ENCODE measurements at regions of chr4 and their contacts with region 1.

Region 1: DNA sequence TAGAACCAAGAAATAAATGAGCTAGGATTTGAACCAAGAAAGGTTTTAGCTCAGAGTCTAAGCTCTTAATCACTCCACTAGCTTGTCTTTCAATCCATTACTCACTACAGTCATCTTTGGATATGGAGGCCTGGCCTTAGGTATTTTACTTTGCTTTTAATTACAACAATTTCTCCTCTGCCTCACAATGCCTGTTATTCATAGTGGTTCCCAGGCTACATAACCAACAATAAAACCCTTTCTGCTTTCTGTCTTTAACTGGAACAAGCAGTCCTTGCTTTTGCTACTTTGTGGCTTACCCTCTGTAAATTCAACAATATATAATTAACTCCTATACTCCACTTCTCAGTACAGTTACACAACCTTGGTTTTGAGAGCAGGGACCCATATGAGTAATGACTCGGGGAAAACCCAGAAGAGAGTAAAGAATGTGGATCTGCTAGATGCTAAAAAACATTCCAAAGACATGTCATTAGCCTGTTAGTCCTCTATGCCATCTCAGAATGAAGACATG is 94.7 kb upstream of the NAP1L5 start:
- DNase-seq: no peak
- H3K4me3 Mint-ChIP-seq: no peak overlapping the region
- H3K27ac Mint-ChIP-seq: peak overlapping the region; percentile 74
- H3K4me1 Mint-ChIP-seq: peaks cover 15% of the 10 kb centered on the region
- H3K27me3 Mint-ChIP-seq: peaks cover 16% of the 10 kb centered on the region

Region 2: DNA sequence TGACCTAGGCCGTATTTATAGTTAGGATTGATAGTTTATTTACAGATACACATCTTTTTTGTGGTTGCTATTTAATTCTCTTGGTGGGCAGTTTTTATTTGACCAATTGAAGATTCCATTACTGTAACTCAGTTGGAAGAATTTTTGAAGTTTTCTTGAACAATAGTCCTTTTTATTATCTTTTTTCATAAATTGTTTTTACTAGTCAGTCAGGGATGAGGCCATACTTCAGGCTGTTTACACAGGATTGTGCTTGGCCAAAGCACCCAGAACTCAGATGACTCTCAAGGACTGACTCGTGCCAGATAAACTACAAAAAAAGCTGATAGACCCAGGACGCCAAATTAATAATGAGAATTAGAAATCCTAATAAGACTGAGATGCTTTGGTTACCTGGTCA is 193.0 kb before region 1 on chr4:
- intact Hi-C with region 1: loop called (anchors 5 kb)
- DNase-seq: no peak
- H3K4me3 Mint-ChIP-seq: peak overlapping the region; percentile 1
- H3K27ac Mint-ChIP-seq: no peak overlapping the region
- H3K4me1 Mint-ChIP-seq: peaks cover 42% of the 10 kb centered on the region
- H3K27me3 Mint-ChIP-seq: no peaks in the 10 kb centered on the region

Region 3: DNA sequence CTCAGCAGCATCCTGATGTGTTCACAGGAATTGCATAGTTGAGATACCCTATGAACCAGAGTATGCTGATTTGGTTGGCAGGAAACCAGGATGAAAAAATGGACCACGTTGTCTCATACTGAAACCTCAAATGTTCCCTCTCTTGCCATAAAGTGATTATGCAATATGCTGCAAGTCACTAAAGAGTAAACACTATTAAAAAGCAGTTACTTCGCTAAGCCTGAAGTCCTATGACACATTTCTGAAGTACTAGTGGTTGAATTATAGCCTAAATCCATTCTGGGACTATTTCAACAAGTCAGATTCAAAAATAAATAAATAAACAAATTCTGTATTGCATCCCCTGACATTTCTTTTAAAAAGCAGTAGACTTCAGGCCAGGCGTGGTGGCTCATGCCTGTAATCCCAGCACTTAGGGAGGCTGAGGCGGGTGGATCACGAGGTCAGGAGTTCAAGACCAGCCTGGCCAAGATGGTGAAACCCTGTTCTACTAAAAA is 11.3 kb after region 1 on chr4:
- intact Hi-C with region 1: loop called (anchors 1 kb)
- DNase-seq: peak; percentile 67
- H3K4me3 Mint-ChIP-seq: no peak overlapping the region
- H3K27ac Mint-ChIP-seq: no peak overlapping the region
- H3K4me1 Mint-ChIP-seq: peaks cover 17% of the 10 kb centered on the region
- H3K27me3 Mint-ChIP-seq: peaks cover 21% of the 10 kb centered on the region

Measured in activated CD4-positive, alpha-beta T cell treated with anti-CD3 and anti-CD28 coated beads, Interleukin-2, amount 10 ng/mL, durations not matched to agents 24 days and 14 days (primary cell).